H1 (cell line): ENCODE measurements at regions of chr17 and their contacts with region 1.

Region 1: GRCh38 chr17:2853111-2853721 is 57.0 kb downstream of the RAP1GAP2 start:
- DNase-seq: peak in 1 of 2 experiments; percentile 76
- H3K4me3 ChIP-seq: peak overlapping the region; percentile 51 to 90 (median 80)
- H3K27ac ChIP-seq: no peak overlapping the region
- H3K4me1 ChIP-seq: peaks cover 12 to 32% (median 22%) of the 10 kb centered on the region in 4 experiments
- H3K27me3 ChIP-seq: peaks cover 0 to 5% (median 2%) of the 10 kb centered on the region in 4 experiments; a peak in 2 of 7 replicates
- CTCF ChIP-seq: no peak
- EP300 ChIP-seq: no peak
- POLR2A ChIP-seq: no peak
- RAD21 ChIP-seq: no peak

Region 2: DNA sequence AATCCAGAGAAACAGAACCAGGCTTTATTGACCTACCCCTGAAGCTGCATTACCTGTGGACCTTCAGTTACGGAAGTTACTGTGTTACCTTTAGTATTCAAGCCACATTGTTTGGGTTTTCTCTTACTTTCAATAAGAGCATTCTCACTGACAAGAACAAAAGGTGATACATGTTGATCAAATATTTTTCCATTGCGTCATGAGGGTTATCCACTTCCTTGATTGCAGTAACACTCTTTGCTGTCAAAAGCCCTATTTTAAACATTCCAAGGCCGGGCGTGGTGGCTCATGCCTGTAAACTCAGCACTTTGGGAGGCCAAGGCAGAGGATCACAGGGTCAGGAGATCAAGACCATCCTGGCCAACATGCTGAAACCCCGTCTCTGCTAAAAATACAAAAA is 288.3 kb before region 1 on chr17:
- CTCF ChIA-PET with region 1: no interaction called
- POLR2A ChIA-PET with region 1: no interaction called
- DNase-seq: no peak
- H3K4me3 ChIP-seq: no peak overlapping the region
- H3K27ac ChIP-seq: no peak overlapping the region
- H3K4me1 ChIP-seq: no peaks in the 10 kb centered on the region
- H3K27me3 ChIP-seq: no peaks in the 10 kb centered on the region
- CTCF ChIP-seq: no peak
- EP300 ChIP-seq: no peak
- POLR2A ChIP-seq: no peak
- RAD21 ChIP-seq: no peak

Region 3: DNA sequence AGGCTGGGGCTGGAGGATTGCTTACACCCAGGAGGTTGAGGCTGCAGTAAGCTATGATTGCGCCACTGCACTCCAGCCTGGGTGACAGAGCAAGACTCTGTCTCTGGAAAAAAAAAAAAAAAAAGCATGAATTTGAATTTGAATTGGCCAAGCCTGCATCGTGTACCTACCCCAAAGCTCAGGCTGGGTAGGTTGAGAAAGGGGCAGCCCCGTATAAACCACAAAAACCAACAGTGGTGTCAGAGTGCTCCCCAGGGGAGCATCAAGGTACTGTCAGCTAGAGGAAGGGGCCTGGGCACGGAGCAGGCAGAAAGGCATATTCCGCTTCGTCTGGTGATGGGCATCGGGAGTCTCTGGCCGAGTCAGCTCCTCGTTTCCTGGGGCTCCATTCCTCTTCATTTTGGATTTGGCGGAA is 16.1 kb before region 1 on chr17:
- CTCF ChIA-PET with region 1: interaction called, 92 read pairs
- POLR2A ChIA-PET with region 1: interaction called, 4 read pairs
- DNase-seq: no peak
- H3K4me3 ChIP-seq: no peak overlapping the region
- H3K27ac ChIP-seq: no peak overlapping the region
- H3K4me1 ChIP-seq: no peaks in the 10 kb centered on the region
- H3K27me3 ChIP-seq: no peaks in the 10 kb centered on the region
- CTCF ChIP-seq: peak in 2 of 3 experiments; percentile 22 to 26; a peak in 2 of 4 replicates
- EP300 ChIP-seq: no peak
- POLR2A ChIP-seq: no peak
- RAD21 ChIP-seq: peak; percentile 56 to 57

Region 4: GRCh38 chr17:2867441-2868424 is 14.5 kb after region 1 on chr17:
- CTCF ChIA-PET with region 1: interaction called, 50 read pairs
- POLR2A ChIA-PET with region 1: interaction called, 11 read pairs
- DNase-seq: peak in 1 of 2 experiments; percentile 67
- H3K4me3 ChIP-seq: no peak overlapping the region
- H3K27ac ChIP-seq: peak overlapping the region; percentile 21; the same call in 1 of the 2 replicates
- H3K4me1 ChIP-seq: peaks cover 11 to 33% (median 28%) of the 10 kb centered on the region in 4 experiments
- H3K27me3 ChIP-seq: no peaks in the 10 kb centered on the region
- CTCF ChIP-seq: peak; percentile 33 to 62 (median 52)
- EP300 ChIP-seq: no peak
- POLR2A ChIP-seq: no peak
- RAD21 ChIP-seq: peak; percentile 40 to 52